MCF 10A (cell line): ENCODE measurements at regions of chr1 and their contacts with region 1.

Region 1: DNA sequence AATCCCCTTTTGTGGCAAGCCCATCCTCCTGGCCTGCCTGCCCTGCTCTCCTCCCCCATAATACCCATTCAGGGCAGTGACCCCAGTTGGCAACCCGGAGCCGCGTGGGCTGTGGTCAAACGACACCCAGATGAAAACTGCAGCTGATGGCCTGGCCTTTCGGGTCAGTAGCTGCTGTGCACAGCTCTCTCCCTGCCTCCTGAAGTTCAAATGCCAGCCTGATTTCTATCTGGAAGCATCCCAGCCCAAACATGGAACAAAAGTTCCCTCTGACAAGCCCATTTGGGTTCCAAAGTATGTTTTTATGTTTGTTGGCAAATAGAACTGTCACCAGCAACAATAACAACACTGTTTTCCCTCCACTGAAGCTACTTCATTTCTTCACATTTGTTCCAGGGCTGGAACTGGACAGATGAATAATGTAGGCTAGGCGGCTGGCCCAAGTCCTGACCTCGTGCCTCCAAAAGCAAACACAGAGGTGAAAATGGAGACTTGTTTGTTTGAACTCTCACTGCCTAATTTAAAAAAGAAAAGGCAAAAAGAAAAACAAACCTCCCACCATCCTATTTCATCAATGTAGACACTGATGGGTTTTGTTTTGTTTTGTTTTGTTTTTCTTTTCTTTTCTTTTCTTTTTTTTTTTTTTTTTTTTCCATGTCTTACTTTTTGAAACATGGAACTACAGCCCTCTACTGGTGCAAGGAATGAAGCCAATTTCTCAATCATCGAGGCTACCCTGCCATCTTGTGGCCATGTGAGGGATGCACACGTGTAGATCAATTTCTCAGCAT is 179.0 kb downstream of the ADSS2 start:
- DNase-seq: peak; percentile 97
- H3K4me3 Mint-ChIP-seq: peak overlapping the region; percentile 65
- H3K27ac Mint-ChIP-seq: peak overlapping the region; percentile 52
- H3K4me1 Mint-ChIP-seq: peaks cover 32% of the 10 kb centered on the region
- H3K27me3 Mint-ChIP-seq: no peaks in the 10 kb centered on the region
- CTCF ChIP-seq: peak; percentile 100

Region 2: GRCh38 chr1:243693800-243694199 is 578.9 kb before region 1 on chr1:
- CTCF ChIA-PET with region 1: interaction called, 10 read pairs
- POLR2A ChIA-PET with region 1: no interaction called
- intact Hi-C with region 1: no loop called
- DNase-seq: no peak
- H3K4me3 Mint-ChIP-seq: no peak overlapping the region
- H3K27ac Mint-ChIP-seq: no peak overlapping the region
- H3K4me1 Mint-ChIP-seq: no peaks in the 10 kb centered on the region
- H3K27me3 Mint-ChIP-seq: no peaks in the 10 kb centered on the region
- CTCF ChIP-seq: no peak

Region 3: GRCh38 chr1:243718893-243719292 is 553.8 kb before region 1 on chr1:
- CTCF ChIA-PET with region 1: interaction called, 75 read pairs
- POLR2A ChIA-PET with region 1: interaction called, 3 read pairs
- intact Hi-C with region 1: no loop called
- DNase-seq: peak; percentile 35
- H3K4me3 Mint-ChIP-seq: no peak overlapping the region
- H3K27ac Mint-ChIP-seq: peak overlapping the region; percentile 43
- H3K4me1 Mint-ChIP-seq: peaks cover 16% of the 10 kb centered on the region
- H3K27me3 Mint-ChIP-seq: no peaks in the 10 kb centered on the region
- CTCF ChIP-seq: no peak

Region 4: DNA sequence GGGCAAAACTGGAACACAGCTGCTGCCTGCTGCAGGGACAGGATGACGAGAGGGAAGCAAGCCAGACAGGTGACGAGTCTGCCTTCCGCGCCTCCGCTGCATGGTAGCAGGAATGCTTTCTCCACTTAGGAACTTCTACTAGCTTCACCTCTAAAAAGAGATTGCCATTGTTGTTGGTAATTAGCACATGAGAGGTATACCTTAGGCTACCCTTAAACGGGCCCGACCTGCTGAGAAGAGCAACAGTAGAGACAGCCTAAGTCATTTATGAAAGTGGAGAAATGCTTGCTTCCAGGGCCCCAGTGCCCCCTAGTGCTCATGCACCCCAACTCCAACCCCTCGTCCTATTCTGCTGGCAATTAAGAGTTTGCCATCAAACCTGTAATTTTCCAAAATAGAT is 325.7 kb before region 1 on chr1:
- CTCF ChIA-PET with region 1: interaction called, 3 read pairs
- POLR2A ChIA-PET with region 1: no interaction called
- intact Hi-C with region 1: loop called (anchors 1 kb)
- DNase-seq: peak; percentile 55
- H3K4me3 Mint-ChIP-seq: no peak overlapping the region
- H3K27ac Mint-ChIP-seq: no peak overlapping the region
- H3K4me1 Mint-ChIP-seq: no peaks in the 10 kb centered on the region
- H3K27me3 Mint-ChIP-seq: no peaks in the 10 kb centered on the region
- CTCF ChIP-seq: peak; percentile 59

Region 5: GRCh38 chr1:244163861-244164562 is 108.7 kb before region 1 on chr1:
- CTCF ChIA-PET with region 1: interaction called, 4 read pairs
- POLR2A ChIA-PET with region 1: no interaction called
- intact Hi-C with region 1: loop called (anchors 1 kb)
- DNase-seq: peak; percentile 98
- H3K4me3 Mint-ChIP-seq: peak overlapping the region; percentile 60
- H3K27ac Mint-ChIP-seq: no peak overlapping the region
- H3K4me1 Mint-ChIP-seq: no peaks in the 10 kb centered on the region
- H3K27me3 Mint-ChIP-seq: no peaks in the 10 kb centered on the region
- CTCF ChIP-seq: no peak

Region 6: DNA sequence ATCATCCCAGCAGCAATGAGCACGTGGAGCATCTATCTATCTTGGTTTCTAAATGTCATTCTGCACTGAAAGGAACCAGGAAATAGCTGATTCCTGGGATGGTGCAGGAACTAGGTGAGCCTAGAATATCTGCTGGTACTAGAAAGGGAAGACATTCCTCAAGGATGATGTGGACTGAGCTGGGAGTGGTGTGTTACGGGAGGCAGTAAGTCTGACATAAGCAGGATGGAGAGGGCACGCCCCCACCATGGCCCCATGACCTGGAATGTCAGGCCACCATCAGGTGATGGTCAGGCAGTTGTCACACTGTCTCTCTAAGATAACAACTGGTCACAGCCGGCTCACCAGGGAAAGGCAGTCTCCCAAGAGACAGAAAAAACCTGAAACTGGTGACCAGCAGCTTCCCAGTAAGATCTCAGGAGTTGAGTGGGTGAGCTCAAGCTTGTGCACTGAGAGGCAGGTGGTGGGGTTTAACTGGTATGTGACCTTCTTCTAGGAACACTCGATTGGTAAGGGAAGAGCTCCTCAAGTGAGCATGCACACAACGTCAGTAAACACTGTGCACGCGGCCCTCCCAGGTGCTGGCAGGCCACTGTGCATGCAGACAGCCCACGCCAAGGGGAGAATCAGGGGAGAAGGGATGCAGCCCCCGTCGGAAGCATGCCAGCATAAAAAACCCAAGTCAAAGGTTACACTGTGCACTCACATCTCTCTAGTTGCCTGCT is 30.4 kb after region 1 on chr1:
- CTCF ChIA-PET with region 1: interaction called, 28 read pairs
- POLR2A ChIA-PET with region 1: interaction called, 11 read pairs
- intact Hi-C with region 1: loop called (anchors 1 kb)
- DNase-seq: peak; percentile 77
- H3K4me3 Mint-ChIP-seq: no peak overlapping the region
- H3K27ac Mint-ChIP-seq: peak overlapping the region; percentile 11
- H3K4me1 Mint-ChIP-seq: peaks cover 40% of the 10 kb centered on the region
- H3K27me3 Mint-ChIP-seq: no peaks in the 10 kb centered on the region
- CTCF ChIP-seq: no peak

Region 7: DNA sequence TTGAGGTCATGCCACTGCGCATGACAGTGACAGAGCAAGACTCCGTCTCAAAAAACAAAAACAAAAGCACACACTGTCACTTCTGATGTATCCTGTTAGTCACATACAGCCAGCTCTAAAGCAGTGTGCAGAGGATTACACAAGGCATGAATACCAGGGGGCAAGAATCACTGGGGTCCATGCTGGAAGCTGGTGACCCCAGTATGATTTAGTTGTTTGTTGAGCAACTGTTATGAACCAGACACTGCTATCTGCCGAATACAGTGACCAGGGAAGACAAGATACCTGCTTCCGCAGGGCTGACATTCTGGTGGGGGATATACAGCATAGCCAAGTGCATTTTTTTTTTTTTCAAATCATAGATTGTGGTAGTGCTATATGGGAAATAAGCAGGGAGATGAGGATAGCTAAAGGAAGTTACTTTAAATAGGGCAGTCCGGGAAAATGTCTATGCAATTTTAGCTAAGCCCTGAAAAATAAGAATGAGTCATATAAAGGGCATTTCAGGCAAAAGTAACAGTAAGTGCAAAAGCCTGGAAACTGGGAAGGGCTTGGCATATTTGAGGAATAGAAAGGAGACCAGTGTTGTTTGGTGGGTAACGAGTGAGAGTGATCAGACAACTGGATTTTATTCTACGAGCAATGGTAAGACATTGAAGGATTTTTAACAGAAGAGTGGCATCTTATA is 109.4 kb after region 1 on chr1:
- CTCF ChIA-PET with region 1: no interaction called
- POLR2A ChIA-PET with region 1: no interaction called
- intact Hi-C with region 1: no loop called
- DNase-seq: peak; percentile 81
- H3K4me3 Mint-ChIP-seq: no peak overlapping the region
- H3K27ac Mint-ChIP-seq: peak overlapping the region; percentile 8
- H3K4me1 Mint-ChIP-seq: peaks cover 11% of the 10 kb centered on the region
- H3K27me3 Mint-ChIP-seq: no peaks in the 10 kb centered on the region
- CTCF ChIP-seq: no peak

Region 8: DNA sequence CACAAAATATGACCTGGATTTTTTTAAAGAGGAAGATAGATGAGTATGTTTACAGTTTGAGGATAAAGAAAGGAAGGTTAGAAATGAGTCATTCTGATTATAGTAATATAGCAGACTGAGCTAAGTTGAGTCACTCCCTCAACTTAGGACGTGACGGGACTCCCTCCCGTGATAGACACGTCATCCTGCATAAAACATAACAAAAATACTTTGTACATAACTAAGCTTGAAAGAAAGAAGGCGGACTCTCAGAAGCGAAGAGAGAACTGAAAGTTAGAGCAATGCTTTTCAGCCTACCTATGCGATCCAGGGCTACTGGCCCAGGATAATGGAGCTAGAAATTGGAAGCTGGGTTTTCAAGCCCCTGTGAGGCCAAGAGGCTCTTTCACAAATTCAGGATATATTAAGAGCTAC is 327.3 kb after region 1 on chr1:
- CTCF ChIA-PET with region 1: no interaction called
- POLR2A ChIA-PET with region 1: no interaction called
- intact Hi-C with region 1: loop called (anchors 10 kb)
- DNase-seq: peak; percentile 97
- H3K4me3 Mint-ChIP-seq: peak overlapping the region; percentile 77
- H3K27ac Mint-ChIP-seq: peak overlapping the region; percentile 99
- H3K4me1 Mint-ChIP-seq: peaks cover 12% of the 10 kb centered on the region
- H3K27me3 Mint-ChIP-seq: no peaks in the 10 kb centered on the region
- CTCF ChIP-seq: no peak